B cell (primary cell): ENCODE measurements at regions of chr9 and their contacts with region 1.

Region 1: DNA sequence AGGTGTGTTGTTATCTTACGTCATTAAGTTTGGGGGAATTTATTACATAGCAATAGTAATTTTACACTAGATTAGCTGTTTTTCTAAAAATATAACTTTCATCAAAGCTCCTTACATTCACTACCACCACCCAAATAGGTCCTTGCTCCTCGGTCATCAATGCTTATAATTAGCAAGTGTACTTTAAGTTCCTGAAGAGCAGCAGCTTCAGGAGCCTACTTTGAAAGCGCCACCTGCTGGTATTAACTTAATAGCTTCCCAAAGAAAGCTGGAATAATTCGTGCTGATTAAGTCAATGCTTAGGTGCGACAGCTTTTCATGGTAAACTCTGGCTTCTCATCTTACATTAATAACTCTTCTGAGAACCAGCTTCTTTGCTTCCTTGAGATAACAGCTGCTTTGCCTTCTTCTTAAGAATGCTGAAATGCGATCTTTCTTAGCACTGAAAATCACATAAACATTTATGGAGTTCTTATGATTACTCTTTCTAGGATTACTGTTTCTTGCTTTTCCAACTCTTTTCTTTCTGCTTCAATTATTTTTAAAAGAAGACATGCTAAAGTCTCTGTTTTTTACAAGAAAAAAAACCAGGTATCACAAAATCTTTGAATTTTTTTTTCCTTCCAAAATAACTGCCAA is 10.0 kb upstream of the C5 start:
- DNase-seq: peak; percentile 76
- ATAC-seq: peak; percentile 51
- H3K4me3 ChIP-seq: no peak overlapping the region
- H3K4me3 Mint-ChIP-seq: no peak overlapping the region
- H3K27ac ChIP-seq: no peak overlapping the region
- H3K27ac Mint-ChIP-seq: no peak overlapping the region
- H3K4me1 ChIP-seq: peaks cover 0 to 7% of the 10 kb centered on the region in 2 donors
- H3K4me1 Mint-ChIP-seq: peaks cover 6% of the 10 kb centered on the region
- H3K27me3 ChIP-seq: no peaks in the 10 kb centered on the region
- H3K27me3 Mint-ChIP-seq: no peaks in the 10 kb centered on the region
- CTCF ChIP-seq: peak; percentile 81

Region 2: DNA sequence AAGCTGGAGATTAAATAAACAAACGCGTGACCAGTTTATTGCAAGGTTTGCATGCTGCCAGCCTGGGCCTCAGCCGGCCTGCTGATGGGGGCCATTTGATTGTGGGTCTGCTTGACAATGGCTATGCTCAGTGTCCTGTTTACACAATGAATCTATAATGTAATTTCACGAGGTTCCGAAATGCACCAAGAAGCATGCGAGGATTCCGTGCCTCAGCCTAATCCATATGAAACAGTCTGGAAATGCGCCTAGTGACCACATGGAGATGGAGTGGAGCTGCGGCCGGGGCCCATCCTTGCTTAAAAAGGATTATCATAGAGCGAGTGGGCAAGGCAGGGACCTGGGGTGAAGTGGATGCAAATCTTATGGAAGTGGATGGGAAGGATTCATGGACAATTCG is 862.5 kb before region 1 on chr9:
- CTCF ChIA-PET with region 1: no interaction called
- POLR2A ChIA-PET with region 1: no interaction called
- intact Hi-C with region 1: no loop called
- DNase-seq: no peak
- ATAC-seq: no peak
- H3K4me3 ChIP-seq: no peak overlapping the region
- H3K4me3 Mint-ChIP-seq: no peak overlapping the region
- H3K27ac ChIP-seq: no peak overlapping the region
- H3K27ac Mint-ChIP-seq: no peak overlapping the region
- H3K4me1 ChIP-seq: no peaks in the 10 kb centered on the region
- H3K4me1 Mint-ChIP-seq: no peaks in the 10 kb centered on the region
- H3K27me3 ChIP-seq: peaks cover 0 to 4% (median 0%) of the 10 kb centered on the region in 4 experiments
- H3K27me3 Mint-ChIP-seq: peaks cover 3% of the 10 kb centered on the region
- CTCF ChIP-seq: no peak

Region 3: GRCh38 chr9:120761011-120761410 is 299.1 kb before region 1 on chr9:
- CTCF ChIA-PET with region 1: interaction called, 173 read pairs
- POLR2A ChIA-PET with region 1: no interaction called
- intact Hi-C with region 1: loop called (anchors 1 kb)
- DNase-seq: no peak
- ATAC-seq: no peak
- H3K4me3 ChIP-seq: no peak overlapping the region
- H3K4me3 Mint-ChIP-seq: no peak overlapping the region
- H3K27ac ChIP-seq: no peak overlapping the region
- H3K27ac Mint-ChIP-seq: no peak overlapping the region
- H3K4me1 ChIP-seq: peaks cover 2 to 13% of the 10 kb centered on the region in 2 donors
- H3K4me1 Mint-ChIP-seq: peaks cover 22% of the 10 kb centered on the region
- H3K27me3 ChIP-seq: no peaks in the 10 kb centered on the region
- H3K27me3 Mint-ChIP-seq: no peaks in the 10 kb centered on the region
- CTCF ChIP-seq: no peak

Region 4: GRCh38 chr9:120985810-120986222 is 74.3 kb before region 1 on chr9:
- CTCF ChIA-PET with region 1: interaction called, 27 read pairs
- POLR2A ChIA-PET with region 1: no interaction called
- intact Hi-C with region 1: loop called (anchors 1 kb)
- DNase-seq: peak; percentile 26
- ATAC-seq: no peak
- H3K4me3 ChIP-seq: no peak overlapping the region
- H3K4me3 Mint-ChIP-seq: no peak overlapping the region
- H3K27ac ChIP-seq: no peak overlapping the region
- H3K27ac Mint-ChIP-seq: no peak overlapping the region
- H3K4me1 ChIP-seq: peaks cover 0 to 3% of the 10 kb centered on the region in 2 donors
- H3K4me1 Mint-ChIP-seq: peaks cover 4% of the 10 kb centered on the region
- H3K27me3 ChIP-seq: no peaks in the 10 kb centered on the region
- H3K27me3 Mint-ChIP-seq: no peaks in the 10 kb centered on the region
- CTCF ChIP-seq: no peak

Region 5: DNA sequence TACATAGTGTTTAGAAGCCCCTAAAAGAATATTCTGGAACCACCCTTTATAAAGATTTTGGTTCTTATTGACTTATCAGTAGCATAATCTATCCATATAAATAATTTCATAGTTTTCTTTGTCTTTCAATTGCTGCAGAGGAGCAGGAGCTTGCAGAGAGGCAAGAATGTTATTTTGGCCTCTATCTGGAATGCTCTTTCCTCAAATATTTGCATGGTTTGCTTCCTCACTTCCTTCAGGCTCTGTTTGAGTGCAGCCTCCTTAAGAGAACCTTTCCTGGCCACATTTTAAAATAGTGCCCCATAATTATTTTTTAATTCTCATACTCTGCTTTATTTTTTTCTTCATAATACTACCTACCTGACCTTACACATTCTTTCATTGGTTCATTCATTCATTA is 11.5 kb before region 1 on chr9:
- CTCF ChIA-PET with region 1: interaction called, 29 read pairs
- POLR2A ChIA-PET with region 1: no interaction called
- intact Hi-C with region 1: no loop called
- DNase-seq: no peak
- ATAC-seq: no peak
- H3K4me3 ChIP-seq: no peak overlapping the region
- H3K4me3 Mint-ChIP-seq: no peak overlapping the region
- H3K27ac ChIP-seq: no peak overlapping the region
- H3K27ac Mint-ChIP-seq: no peak overlapping the region
- H3K4me1 ChIP-seq: no peaks in the 10 kb centered on the region
- H3K4me1 Mint-ChIP-seq: no peaks in the 10 kb centered on the region
- H3K27me3 ChIP-seq: no peaks in the 10 kb centered on the region
- H3K27me3 Mint-ChIP-seq: no peaks in the 10 kb centered on the region
- CTCF ChIP-seq: no peak

Region 6: DNA sequence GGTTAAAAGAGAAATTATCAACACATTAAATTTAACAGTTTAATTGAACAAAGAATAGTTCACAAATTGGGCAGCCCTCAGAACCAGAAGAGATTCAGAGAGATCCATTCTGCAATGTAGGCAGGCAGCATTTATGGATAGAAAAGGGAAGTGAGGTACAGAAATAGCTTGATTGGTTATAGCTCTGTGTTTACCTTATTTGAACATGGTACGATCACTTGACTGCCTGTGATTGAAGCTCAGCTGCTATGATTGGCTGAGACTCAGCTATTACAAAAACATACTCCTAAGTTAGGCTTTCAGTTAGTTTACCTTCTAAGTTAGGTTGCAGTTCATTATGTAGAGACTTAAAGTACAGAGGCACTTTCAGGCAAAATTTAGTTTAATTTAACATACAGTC is 22.0 kb after region 1 on chr9:
- CTCF ChIA-PET with region 1: interaction called, 14 read pairs
- POLR2A ChIA-PET with region 1: no interaction called
- intact Hi-C with region 1: no loop called
- DNase-seq: no peak
- ATAC-seq: peak; percentile 24
- H3K4me3 ChIP-seq: no peak overlapping the region
- H3K4me3 Mint-ChIP-seq: no peak overlapping the region
- H3K27ac ChIP-seq: peak overlapping the region; percentile 13 to 47
- H3K27ac Mint-ChIP-seq: peak overlapping the region; percentile 28
- H3K4me1 ChIP-seq: peaks cover 6 to 7% of the 10 kb centered on the region in 2 donors
- H3K4me1 Mint-ChIP-seq: peaks cover 25% of the 10 kb centered on the region
- H3K27me3 ChIP-seq: no peaks in the 10 kb centered on the region
- H3K27me3 Mint-ChIP-seq: no peaks in the 10 kb centered on the region
- CTCF ChIP-seq: no peak

Region 7: GRCh38 chr9:121498150-121498486 is 438.0 kb after region 1 on chr9:
- CTCF ChIA-PET with region 1: no interaction called
- POLR2A ChIA-PET with region 1: no interaction called
- intact Hi-C with region 1: no loop called
- DNase-seq: peak; percentile 86
- ATAC-seq: peak; percentile 84
- H3K4me3 ChIP-seq: peak overlapping the region; percentile 29 to 58 (median 45)
- H3K4me3 Mint-ChIP-seq: peak overlapping the region; percentile 85
- H3K27ac ChIP-seq: no peak overlapping the region
- H3K27ac Mint-ChIP-seq: no peak overlapping the region
- H3K4me1 ChIP-seq: peaks cover 36 to 37% of the 10 kb centered on the region in 2 donors
- H3K4me1 Mint-ChIP-seq: peaks cover 45% of the 10 kb centered on the region
- H3K27me3 ChIP-seq: peaks cover 0 to 33% (median 16%) of the 10 kb centered on the region in 4 experiments
- H3K27me3 Mint-ChIP-seq: peaks cover 39% of the 10 kb centered on the region
- CTCF ChIP-seq: peak; percentile 82

Region 8: GRCh38 chr9:121744002-121744686 is 684.0 kb after region 1 on chr9:
- CTCF ChIA-PET with region 1: no interaction called
- POLR2A ChIA-PET with region 1: no interaction called
- intact Hi-C with region 1: no loop called
- DNase-seq: peak; percentile 25
- ATAC-seq: peak; percentile 81
- H3K4me3 ChIP-seq: no peak overlapping the region
- H3K4me3 Mint-ChIP-seq: no peak overlapping the region
- H3K27ac ChIP-seq: no peak overlapping the region
- H3K27ac Mint-ChIP-seq: no peak overlapping the region
- H3K4me1 ChIP-seq: no peaks in the 10 kb centered on the region
- H3K4me1 Mint-ChIP-seq: peaks cover 5% of the 10 kb centered on the region
- H3K27me3 ChIP-seq: peaks cover 0 to 2% (median 0%) of the 10 kb centered on the region in 4 experiments
- H3K27me3 Mint-ChIP-seq: no peaks in the 10 kb centered on the region
- CTCF ChIP-seq: peak; percentile 27